WTC11 (cell line): ENCODE measurements at regions of chr19 and their contacts with region 1.

Region 1: GRCh38 chr19:3544742-3545668 is 6.0 kb downstream of the TEKTIP1 start:
- DNase-seq: peak; percentile 93
- ATAC-seq: peak; percentile 85
- H3K4me3 Mint-ChIP-seq: no peak overlapping the region
- H3K27ac Mint-ChIP-seq: no peak overlapping the region
- H3K4me1 Mint-ChIP-seq: no peaks in the 10 kb centered on the region
- H3K27me3 Mint-ChIP-seq: no peaks in the 10 kb centered on the region
- CTCF ChIP-seq: peak; percentile 97

Region 2: DNA sequence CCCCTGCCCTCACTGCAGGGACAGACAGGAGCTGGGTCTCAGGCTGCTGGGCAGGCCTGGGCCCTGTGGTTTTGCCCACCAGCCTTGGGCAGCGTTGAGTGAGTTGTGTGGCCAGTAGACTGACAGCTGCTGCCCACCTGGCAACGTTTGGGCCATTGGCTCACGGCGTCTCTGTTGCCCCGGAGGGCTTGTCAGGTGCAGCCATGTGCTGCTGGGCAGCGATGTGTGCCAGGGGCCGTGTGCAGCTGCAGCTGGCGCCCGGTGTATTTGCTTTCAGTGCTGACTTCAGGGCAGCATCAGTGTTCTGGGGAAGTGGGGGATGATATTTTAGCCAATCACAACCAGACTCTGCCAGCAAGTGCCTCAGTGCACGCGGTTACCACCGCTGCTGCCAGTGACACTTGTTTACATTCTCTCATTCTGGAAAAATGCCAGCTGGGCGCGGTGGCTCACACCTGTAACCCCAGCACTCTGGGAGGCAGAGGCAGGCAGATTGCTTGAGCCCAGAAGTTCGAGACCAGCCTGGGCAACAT is 28.3 kb before region 1 on chr19:
- CTCF ChIA-PET with region 1: interaction called, 20 read pairs
- POLR2A ChIA-PET with region 1: no interaction called
- DNase-seq: no peak
- ATAC-seq: no peak
- H3K4me3 Mint-ChIP-seq: no peak overlapping the region
- H3K27ac Mint-ChIP-seq: peak overlapping the region; percentile 41
- H3K4me1 Mint-ChIP-seq: peaks cover 55% of the 10 kb centered on the region
- H3K27me3 Mint-ChIP-seq: no peaks in the 10 kb centered on the region
- CTCF ChIP-seq: no peak

Region 3: GRCh38 chr19:3526507-3527244 is 18.3 kb before region 1 on chr19:
- CTCF ChIA-PET with region 1: interaction called, 22 read pairs
- POLR2A ChIA-PET with region 1: no interaction called
- DNase-seq: no peak
- ATAC-seq: 0 out of 2 replicates have a peak, but pooled peaks have one; percentile 35
- H3K4me3 Mint-ChIP-seq: no peak overlapping the region
- H3K27ac Mint-ChIP-seq: no peak overlapping the region
- H3K4me1 Mint-ChIP-seq: no peaks in the 10 kb centered on the region
- H3K27me3 Mint-ChIP-seq: no peaks in the 10 kb centered on the region
- CTCF ChIP-seq: peak; percentile 26; the same call in 1 of the 2 replicates

Region 4: GRCh38 chr19:3557461-3558248 is 12.7 kb after region 1 on chr19 and contains the start of gene MFSD12:
- CTCF ChIA-PET with region 1: interaction called, 20 read pairs
- POLR2A ChIA-PET with region 1: interaction called, 4 read pairs
- DNase-seq: peak; percentile 96
- ATAC-seq: peak; percentile 93
- H3K4me3 Mint-ChIP-seq: peak within 1 kb of the TSS; percentile 93
- H3K27ac Mint-ChIP-seq: peak within 1 kb of the TSS; percentile 49; the same call in 1 of the 2 replicates
- H3K4me1 Mint-ChIP-seq: peaks cover 12% of the 10 kb centered on the region
- H3K27me3 Mint-ChIP-seq: peaks cover 32% of the 10 kb centered on the region
- CTCF ChIP-seq: no peak
- total RNA-seq, gene MFSD12: 59.9 to 75.4 TPM (median 71.0 TPM) in 3 replicates

Region 5: GRCh38 chr19:3593156-3593555 is 48.2 kb after region 1 on chr19:
- CTCF ChIA-PET with region 1: interaction called, 11 read pairs
- POLR2A ChIA-PET with region 1: no interaction called
- DNase-seq: peak; percentile 69
- ATAC-seq: peak; percentile 95
- H3K4me3 Mint-ChIP-seq: no peak overlapping the region
- H3K27ac Mint-ChIP-seq: no peak overlapping the region
- H3K4me1 Mint-ChIP-seq: no peaks in the 10 kb centered on the region
- H3K27me3 Mint-ChIP-seq: peaks cover 27% of the 10 kb centered on the region
- CTCF ChIP-seq: no peak